Caco-2 (cell line): ENCODE measurements at regions of chr2 and their contacts with region 1.

Region 1: GRCh38 chr2:41840702-41841551 is 206.9 kb upstream of the PKDCC start:
- DNase-seq: peak; percentile 98 to 99
- H3K4me3 ChIP-seq: peak overlapping the region; percentile 56
- H3K4me3 Mint-ChIP-seq: peak overlapping the region; percentile 91
- H3K27ac Mint-ChIP-seq: peak overlapping the region; percentile 77
- H3K4me1 ChIP-seq: no peaks in the 10 kb centered on the region
- H3K4me1 Mint-ChIP-seq: no peaks in the 10 kb centered on the region
- H3K27me3 ChIP-seq: no peaks in the 10 kb centered on the region
- H3K27me3 Mint-ChIP-seq: peaks cover 3% of the 10 kb centered on the region
- CTCF ChIP-seq: peak; percentile 98 to 100

Region 2: GRCh38 chr2:41806286-41806685 is 34.6 kb before region 1 on chr2:
- CTCF ChIA-PET with region 1: no interaction called
- POLR2A ChIA-PET with region 1: no interaction called
- intact Hi-C with region 1: loop called (anchors 1 kb)
- DNase-seq: peak in 1 of 2 experiments; percentile 8
- H3K4me3 ChIP-seq: no peak overlapping the region
- H3K4me3 Mint-ChIP-seq: no peak overlapping the region
- H3K27ac Mint-ChIP-seq: no peak overlapping the region
- H3K4me1 ChIP-seq: no peaks in the 10 kb centered on the region
- H3K4me1 Mint-ChIP-seq: no peaks in the 10 kb centered on the region
- H3K27me3 ChIP-seq: no peaks in the 10 kb centered on the region
- H3K27me3 Mint-ChIP-seq: peaks cover 12% of the 10 kb centered on the region
- CTCF ChIP-seq: peak; percentile 17 to 25

Region 3: GRCh38 chr2:41828052-41828643 is 12.8 kb before region 1 on chr2:
- CTCF ChIA-PET with region 1: interaction called, 3 read pairs
- POLR2A ChIA-PET with region 1: interaction called, 3 read pairs
- intact Hi-C with region 1: loop called (anchors 1 kb)
- DNase-seq: peak in 1 of 2 experiments; percentile 27
- H3K4me3 ChIP-seq: no peak overlapping the region
- H3K4me3 Mint-ChIP-seq: no peak overlapping the region
- H3K27ac Mint-ChIP-seq: no peak overlapping the region
- H3K4me1 ChIP-seq: peaks cover 27% of the 10 kb centered on the region
- H3K4me1 Mint-ChIP-seq: peaks cover 6% of the 10 kb centered on the region
- H3K27me3 ChIP-seq: no peaks in the 10 kb centered on the region; the same call in 1 of the 2 replicates
- H3K27me3 Mint-ChIP-seq: no peaks in the 10 kb centered on the region
- CTCF ChIP-seq: no peak

Region 4: GRCh38 chr2:41859615-41860520 is 18.9 kb after region 1 on chr2:
- CTCF ChIA-PET with region 1: interaction called, 7 read pairs
- POLR2A ChIA-PET with region 1: no interaction called
- intact Hi-C with region 1: loop called (anchors 1 kb)
- DNase-seq: peak; percentile 65 to 75
- H3K4me3 ChIP-seq: no peak overlapping the region
- H3K4me3 Mint-ChIP-seq: peak overlapping the region; percentile 74
- H3K27ac Mint-ChIP-seq: peak overlapping the region; percentile 98
- H3K4me1 ChIP-seq: peaks cover 50% of the 10 kb centered on the region
- H3K4me1 Mint-ChIP-seq: peaks cover 28% of the 10 kb centered on the region
- H3K27me3 ChIP-seq: no peaks in the 10 kb centered on the region
- H3K27me3 Mint-ChIP-seq: no peaks in the 10 kb centered on the region
- CTCF ChIP-seq: no peak

Region 5: DNA sequence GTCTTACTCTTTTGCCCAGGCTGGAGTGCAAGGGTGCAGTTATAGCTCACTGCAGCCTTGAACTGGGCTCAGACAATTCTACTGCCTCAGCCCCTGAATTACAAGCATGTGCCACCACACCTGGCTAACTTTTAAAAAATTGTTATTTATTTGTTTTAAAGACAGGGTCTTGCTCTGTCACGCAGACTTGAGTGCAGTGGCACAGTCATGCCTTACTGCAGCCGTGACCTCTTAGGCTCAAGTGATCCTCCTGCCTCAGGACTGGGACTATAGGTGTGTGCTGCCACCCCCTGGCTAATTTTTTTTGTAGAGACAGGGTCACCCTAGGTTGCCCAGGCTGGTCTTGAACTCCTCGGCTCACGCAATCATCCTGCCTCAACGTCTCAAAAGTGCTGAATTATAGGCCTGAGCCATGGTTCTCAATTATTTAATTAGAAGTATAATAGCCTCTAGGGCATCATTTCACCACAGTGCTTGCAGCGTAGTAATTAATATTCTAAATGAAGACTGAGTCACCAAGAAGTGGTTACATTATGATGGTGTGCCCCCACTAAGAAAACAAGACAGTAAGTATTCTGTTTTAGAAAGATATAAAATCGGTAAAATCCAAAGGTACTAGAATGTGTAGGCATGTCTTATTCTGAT is 397.8 kb after region 1 on chr2:
- CTCF ChIA-PET with region 1: no interaction called
- POLR2A ChIA-PET with region 1: no interaction called
- intact Hi-C with region 1: loop called (anchors 5 kb)
- DNase-seq: peak; percentile 75 to 78
- H3K4me3 ChIP-seq: no peak overlapping the region
- H3K4me3 Mint-ChIP-seq: no peak overlapping the region
- H3K27ac Mint-ChIP-seq: no peak overlapping the region
- H3K4me1 ChIP-seq: peaks cover 33% of the 10 kb centered on the region
- H3K4me1 Mint-ChIP-seq: peaks cover 49% of the 10 kb centered on the region
- H3K27me3 ChIP-seq: no peaks in the 10 kb centered on the region
- H3K27me3 Mint-ChIP-seq: no peaks in the 10 kb centered on the region
- CTCF ChIP-seq: peak; percentile 51 to 55

Region 6: DNA sequence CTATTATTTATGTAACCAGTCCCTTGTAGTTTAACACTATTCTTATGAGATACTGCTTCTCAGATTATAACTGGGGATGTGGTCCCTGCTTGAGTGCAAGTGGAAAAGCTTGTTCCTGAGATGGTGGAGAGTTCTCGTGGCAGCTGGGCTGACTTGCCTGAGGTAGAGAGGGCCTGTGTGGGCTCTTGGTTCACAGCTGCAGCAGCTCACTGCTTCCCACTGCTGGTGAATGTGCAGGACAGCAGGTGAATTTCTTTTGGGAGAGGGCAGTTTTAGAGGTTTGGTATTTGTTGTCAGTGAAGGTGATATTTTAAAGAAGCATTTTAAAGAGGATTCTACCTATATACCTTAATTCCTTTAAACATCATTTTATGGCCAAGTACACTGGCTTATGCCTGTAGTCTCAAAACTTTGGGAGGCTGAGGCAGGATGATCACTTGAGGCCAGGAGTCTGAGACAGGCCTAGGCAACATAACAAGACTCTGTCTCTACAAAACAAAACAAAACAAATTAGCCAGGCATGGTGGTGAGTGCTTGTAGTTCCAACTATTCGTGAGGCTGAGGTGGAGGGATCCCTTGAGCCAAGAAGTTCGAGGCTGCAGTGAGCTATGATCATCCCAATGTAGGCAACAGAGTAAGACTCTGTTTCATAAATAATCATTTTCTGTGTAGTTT is 822.3 kb after region 1 on chr2:
- CTCF ChIA-PET with region 1: no interaction called
- POLR2A ChIA-PET with region 1: no interaction called
- intact Hi-C with region 1: loop called (anchors 1 kb)
- DNase-seq: peak; percentile 76 to 78
- H3K4me3 ChIP-seq: no peak overlapping the region
- H3K4me3 Mint-ChIP-seq: no peak overlapping the region
- H3K27ac Mint-ChIP-seq: no peak overlapping the region
- H3K4me1 ChIP-seq: no peaks in the 10 kb centered on the region
- H3K4me1 Mint-ChIP-seq: peaks cover 2% of the 10 kb centered on the region
- H3K27me3 ChIP-seq: no peaks in the 10 kb centered on the region
- H3K27me3 Mint-ChIP-seq: no peaks in the 10 kb centered on the region
- CTCF ChIP-seq: peak; percentile 97 to 99